ENCODE measurements at regions of chr2 and their contacts with region 1.

Region 1: DNA sequence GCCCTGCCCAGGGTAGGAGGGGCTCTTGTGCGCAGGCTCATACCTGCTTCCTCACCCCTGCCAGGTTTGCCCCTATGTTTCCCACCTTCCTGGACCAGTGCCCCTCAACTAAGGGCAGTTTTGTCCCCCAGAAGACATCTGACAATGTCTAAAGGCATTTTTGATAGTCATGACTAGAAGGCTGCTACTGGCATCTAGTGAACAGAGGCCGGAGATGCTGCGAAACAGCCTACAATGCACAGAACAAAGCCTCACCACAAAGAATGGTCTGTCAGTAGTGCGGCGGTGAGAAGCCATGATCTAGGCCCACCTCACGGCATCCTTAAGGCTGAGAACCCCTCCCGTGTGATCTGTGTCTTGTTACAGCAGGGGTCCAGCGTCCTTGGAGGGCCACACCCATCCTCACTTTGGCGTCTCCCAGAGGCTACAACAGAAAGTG is 96.0 kb downstream of the TMEM17 start:
- DNase-seq: no peak
- ATAC-seq: no peak

Region 2: DNA sequence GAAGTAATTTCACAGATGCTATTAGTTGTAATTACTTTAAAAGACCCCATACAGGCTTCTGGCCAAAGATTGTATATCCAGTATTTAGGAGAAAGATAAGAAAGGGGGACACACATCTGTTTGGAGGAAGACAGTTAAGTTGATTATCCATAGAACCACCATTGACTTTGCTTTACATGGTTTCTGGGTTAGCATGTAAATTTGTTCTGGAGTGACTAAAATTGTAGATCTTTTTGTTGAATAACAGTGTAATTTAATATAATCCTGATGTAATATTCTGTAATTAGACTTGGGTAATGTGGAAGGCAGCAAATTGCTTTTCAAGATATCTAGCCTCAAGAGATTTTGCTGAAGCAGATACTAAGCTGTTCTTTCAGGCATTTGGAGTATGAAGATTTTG is 487.3 kb before region 1 on chr2:
- intact Hi-C with region 1: loop called (anchors 1 kb)
- DNase-seq: no peak
- ATAC-seq: no peak

Region 3: DNA sequence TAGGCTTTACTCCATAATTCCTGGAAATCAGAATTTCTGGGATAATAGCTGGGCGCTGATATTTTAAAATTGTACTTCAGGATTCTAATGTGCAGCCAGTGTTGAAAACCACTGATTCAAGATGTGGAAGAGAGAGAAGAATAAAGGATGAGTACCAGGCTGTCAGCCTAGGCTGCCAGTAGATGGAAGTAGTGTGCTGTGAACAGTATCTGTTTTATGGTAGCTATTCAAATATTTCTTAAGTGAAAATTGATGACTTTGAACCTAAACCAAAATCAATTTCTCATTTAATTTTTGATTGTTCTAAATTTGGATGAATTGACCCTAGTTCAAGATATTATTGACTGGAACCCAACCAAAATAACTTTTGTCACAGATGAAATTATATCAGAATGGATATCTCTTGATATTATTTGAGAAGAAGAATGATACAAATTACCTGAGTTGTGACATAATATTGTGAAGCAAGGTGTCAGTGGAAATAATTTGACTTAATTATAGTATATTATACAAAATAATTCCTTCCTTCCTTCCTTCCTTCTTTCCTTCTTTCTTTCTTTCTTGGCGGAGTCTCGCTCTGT is 416.5 kb before region 1 on chr2:
- intact Hi-C with region 1: loop called (anchors 1 kb)
- DNase-seq: no peak
- ATAC-seq: peak; percentile 71

Region 4: GRCh38 chr2:62216616-62217015 is 193.4 kb before region 1 on chr2:
- intact Hi-C with region 1: loop called (anchors 5 kb)
- DNase-seq: no peak
- ATAC-seq: peak; percentile 67